Activated naive CD4-positive, alpha-beta T cell treated with anti-CD3 and anti-CD28 coated beads for 36 hours (primary cell): ENCODE measurements at regions of chr18 and their contacts with region 1.

Region 1: GRCh38 chr18:24397694-24398365 is at the start of gene OSBPL1A:
- DNase-seq: peak; percentile 88
- H3K4me3 Mint-ChIP-seq: peak within 1 kb of the TSS; percentile 76
- H3K27ac Mint-ChIP-seq: no peak within 1 kb of the TSS
- H3K4me1 Mint-ChIP-seq: peaks cover 18% of the 10 kb centered on the region
- H3K27me3 Mint-ChIP-seq: peaks cover 15% of the 10 kb centered on the region
- total RNA-seq, gene OSBPL1A: 2.4 to 2.7 TPM

Region 2: GRCh38 chr18:24413148-24413547 is 15.3 kb after region 1 on chr18:
- CTCF ChIA-PET with region 1: interaction called, 4 read pairs
- intact Hi-C with region 1: loop called (anchors 2 kb)
- DNase-seq: no peak
- H3K4me3 Mint-ChIP-seq: no peak overlapping the region
- H3K27ac Mint-ChIP-seq: no peak overlapping the region
- H3K4me1 Mint-ChIP-seq: peaks cover 7% of the 10 kb centered on the region
- H3K27me3 Mint-ChIP-seq: peaks cover 26% of the 10 kb centered on the region

Region 3: DNA sequence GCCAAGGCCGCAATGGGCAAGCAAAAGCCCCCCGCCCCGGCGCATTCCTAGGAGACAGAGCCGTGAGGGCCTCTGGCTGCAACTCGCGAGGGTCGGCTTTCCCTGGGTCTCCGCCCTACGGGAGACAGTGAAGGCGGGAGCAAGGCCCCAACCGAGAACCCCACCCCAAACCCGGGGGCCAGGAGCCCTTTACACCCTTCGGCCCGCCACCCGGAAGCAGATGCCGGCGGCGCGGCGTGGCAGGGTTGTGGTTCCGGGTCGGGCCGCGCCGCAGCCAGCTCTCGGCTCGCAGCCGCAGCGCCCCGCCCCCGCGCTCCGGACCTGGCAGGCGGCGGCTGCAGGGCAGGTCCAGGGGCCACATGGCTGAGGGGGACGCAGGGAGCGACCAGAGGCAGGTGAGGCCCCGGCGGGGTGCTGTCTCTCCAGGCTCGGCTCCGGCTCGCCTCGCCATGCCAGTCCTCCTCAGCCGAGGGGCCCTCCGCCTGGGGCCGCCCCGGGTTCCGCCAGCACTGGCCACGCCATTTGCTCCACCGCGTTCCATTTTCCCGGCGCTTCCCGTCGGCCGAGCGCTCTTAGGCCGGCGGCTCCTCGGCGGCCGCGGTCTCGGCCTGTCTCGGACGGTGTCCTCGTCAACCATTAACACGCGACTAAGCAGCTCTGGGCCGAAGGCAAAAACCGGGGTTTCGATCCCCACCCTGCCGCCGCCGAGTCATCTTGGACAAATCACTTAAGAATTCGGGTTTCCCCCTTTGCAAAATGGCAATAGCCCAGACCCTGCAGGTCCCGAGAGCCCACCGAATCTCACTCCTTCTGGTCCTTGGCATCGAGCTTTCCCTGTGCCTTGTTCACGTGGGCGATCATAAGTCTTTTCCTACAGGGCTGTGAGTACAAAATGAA is 28.8 kb after region 1 on chr18 and contains the start of gene IMPACT:
- CTCF ChIA-PET with region 1: interaction called, 3 read pairs
- intact Hi-C with region 1: loop called (anchors 1 kb)
- DNase-seq: peak; percentile 75
- H3K4me3 Mint-ChIP-seq: peak within 1 kb of the TSS; percentile 91
- H3K27ac Mint-ChIP-seq: peak within 1 kb of the TSS; percentile 78
- H3K4me1 Mint-ChIP-seq: peaks cover 22% of the 10 kb centered on the region
- H3K27me3 Mint-ChIP-seq: peaks cover 17% of the 10 kb centered on the region
- total RNA-seq, gene IMPACT: 19.4 to 19.9 TPM

Region 4: DNA sequence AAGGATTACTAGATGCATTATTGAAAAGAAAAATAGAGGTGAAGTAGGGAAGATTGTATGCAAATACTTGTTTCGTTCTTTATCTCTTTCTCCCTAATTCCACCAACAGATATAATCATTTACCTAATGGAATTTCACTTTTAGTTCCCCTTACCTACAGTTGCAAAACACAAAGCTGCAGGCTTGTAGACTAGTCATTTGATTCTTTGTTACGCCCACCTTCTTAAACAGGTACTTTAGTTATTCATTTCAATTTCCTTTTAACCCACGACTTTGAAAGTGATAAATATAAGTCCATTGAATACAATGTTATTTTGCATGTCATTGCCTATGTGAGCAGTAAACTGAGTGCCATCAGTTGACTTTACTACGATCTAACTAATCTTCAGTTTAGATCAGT is 58.7 kb after region 1 on chr18:
- CTCF ChIA-PET with region 1: no interaction called
- intact Hi-C with region 1: loop called (anchors 10 kb)
- DNase-seq: no peak
- H3K4me3 Mint-ChIP-seq: no peak overlapping the region
- H3K27ac Mint-ChIP-seq: no peak overlapping the region
- H3K4me1 Mint-ChIP-seq: peaks cover 8% of the 10 kb centered on the region
- H3K27me3 Mint-ChIP-seq: no peaks in the 10 kb centered on the region

Region 5: GRCh38 chr18:25351777-25352628 is 954.2 kb after region 1 on chr18 and contains the start of gene ZNF521:
- CTCF ChIA-PET with region 1: no interaction called
- intact Hi-C with region 1: loop called (anchors 10 kb)
- DNase-seq: peak; percentile 46
- H3K4me3 Mint-ChIP-seq: peak within 1 kb of the TSS; percentile 72
- H3K27ac Mint-ChIP-seq: no peak within 1 kb of the TSS
- H3K4me1 Mint-ChIP-seq: peaks cover 12% of the 10 kb centered on the region
- H3K27me3 Mint-ChIP-seq: peaks cover 51% of the 10 kb centered on the region
- total RNA-seq, gene ZNF521: not detected